Sciatic nerve (tissue), 2 donors: ENCODE measurements at regions of chr2 and their contacts with region 1.

Region 1: DNA sequence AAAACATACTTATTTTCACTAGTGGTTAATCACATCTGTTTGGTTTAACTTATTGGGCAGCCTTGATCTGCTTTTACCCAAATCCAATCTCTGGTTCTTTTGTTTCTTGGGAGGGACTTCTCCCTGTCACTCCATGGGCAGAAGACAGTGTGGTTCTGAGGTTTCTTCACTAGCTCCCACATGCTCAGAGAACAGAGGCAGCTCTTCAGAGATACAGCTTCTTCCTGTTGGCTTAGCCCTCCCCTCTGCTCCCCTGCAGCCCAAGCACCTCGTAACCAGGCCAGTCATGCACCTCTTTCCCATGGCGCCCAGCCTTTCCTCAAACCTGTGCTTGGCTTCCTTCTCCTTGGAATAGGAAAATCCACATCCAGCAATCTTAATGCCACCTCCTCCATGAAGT is 32.8 kb downstream of the SLC9A2 start:
- DNase-seq: no peak
- ATAC-seq: no peak

Region 2: DNA sequence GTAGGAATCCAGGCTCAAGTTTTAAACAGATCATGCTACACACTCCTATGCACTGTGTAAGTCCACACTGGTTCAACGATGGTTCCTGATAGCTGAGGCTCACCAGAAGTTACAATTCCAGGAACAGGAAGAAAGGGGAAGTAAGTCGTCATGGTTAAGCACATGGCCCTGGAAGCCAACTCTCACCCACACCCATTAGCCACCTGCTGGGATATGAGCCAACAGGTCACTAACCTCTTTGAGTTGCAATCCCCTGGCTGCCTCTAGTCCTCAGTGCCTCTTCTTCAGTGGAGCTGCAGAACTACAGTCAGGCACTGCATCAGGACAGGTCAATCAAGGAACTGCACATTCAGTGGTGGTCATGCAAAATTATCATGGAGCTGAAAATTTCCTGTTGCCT is 243.3 kb after region 1 on chr2:
- intact Hi-C with region 1: loop called (anchors 5 kb)
- DNase-seq: no peak
- ATAC-seq: no peak